Mammary epithelial cell (primary cell): ENCODE measurements at regions of chr1 and their contacts with region 1.

Region 1: DNA sequence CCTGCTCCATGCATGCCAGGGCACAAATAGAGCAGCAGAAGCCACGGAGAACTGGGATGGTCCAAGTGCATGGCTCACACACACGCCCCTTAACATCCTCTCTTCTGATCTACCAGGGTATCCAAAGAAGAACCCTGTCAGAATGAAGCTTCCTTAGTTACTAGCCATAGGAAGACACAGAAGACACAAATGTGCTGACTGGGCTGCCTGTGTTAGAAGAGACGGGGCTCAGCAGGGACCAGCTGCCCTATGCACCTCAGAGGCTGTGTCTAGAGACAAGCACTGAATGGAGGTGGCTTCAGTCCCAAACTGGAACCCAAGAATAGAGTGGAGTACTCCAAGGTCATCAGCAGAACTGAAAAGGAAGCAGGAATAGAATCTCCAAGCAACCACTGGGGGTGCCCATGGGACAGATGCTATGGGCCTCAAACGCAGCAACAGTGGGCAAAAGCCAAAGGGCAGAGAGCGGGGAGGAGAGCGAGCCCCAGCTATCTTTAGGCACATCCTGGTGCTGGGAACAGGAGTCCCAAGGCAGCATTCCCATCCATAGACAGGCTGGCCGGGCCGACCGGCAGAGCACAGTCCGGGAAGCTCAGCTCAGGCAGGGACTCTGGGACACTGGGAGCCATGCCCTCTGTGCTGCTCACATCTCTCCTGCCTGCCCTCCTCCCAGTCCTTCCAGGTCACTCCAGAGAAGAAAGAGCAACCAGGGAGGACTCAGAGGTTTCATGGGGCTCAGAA is 9.5 kb downstream of the SLC6A9 start:
- DNase-seq: no peak
- H3K4me3 ChIP-seq: no peak overlapping the region
- H3K27ac ChIP-seq: no peak overlapping the region
- H3K4me1 ChIP-seq: no peaks in the 10 kb centered on the region
- H3K27me3 ChIP-seq: no peaks in the 10 kb centered on the region
- CTCF ChIP-seq: no peak

Region 2: DNA sequence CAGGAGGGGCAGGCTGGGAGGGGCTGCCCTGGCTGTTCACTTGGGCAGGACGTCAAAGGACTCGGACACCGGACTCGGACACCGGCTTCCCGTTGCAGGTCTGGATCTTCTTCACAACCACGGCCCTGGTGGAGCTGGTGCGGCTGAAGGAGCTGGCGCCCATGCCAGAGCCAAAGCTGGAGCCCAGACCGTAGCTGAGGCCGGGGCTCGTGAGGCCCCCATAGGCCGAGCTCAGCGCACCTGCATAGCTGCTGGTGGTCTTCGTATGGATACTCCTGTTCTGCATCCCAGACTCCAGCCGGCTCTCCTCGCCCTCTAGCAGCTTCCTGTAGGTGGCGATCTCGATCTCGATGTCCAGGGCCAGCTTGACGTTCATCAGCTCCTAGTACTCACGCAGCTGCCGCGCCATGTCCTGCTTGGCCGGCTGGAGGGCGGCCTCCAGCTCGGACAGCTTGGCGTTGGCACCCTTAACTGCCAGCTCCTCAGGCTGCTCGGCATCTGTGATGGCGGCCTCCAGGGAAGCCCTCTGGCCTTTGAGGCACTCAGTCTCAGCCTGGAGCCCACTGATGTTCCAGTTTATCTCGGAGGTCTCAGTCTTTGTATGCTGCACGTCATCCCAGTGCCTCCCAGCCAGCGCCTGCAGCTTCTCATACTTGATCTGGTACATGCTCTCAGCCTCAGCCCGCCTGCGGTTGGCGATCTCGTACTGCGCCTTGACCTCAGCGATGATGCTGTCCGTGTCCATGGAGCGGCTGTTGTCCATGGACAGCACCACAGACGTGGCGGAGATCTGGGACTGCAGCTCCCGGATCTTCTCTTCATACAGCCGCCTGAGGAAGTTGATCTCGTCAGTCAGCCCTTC is 81.8 kb after region 1 on chr1:
- CTCF ChIA-PET with region 1: no interaction called
- dilution Hi-C with region 1: loop called (anchors 5 kb)
- in situ Hi-C with region 1: no loop called
- intact Hi-C with region 1: no loop called
- DNase-seq: no peak
- H3K4me3 ChIP-seq: no peak overlapping the region
- H3K27ac ChIP-seq: no peak overlapping the region
- H3K4me1 ChIP-seq: no peaks in the 10 kb centered on the region
- H3K27me3 ChIP-seq: no peaks in the 10 kb centered on the region
- CTCF ChIP-seq: peak in 1 of 2 donors; percentile 20

Region 3: DNA sequence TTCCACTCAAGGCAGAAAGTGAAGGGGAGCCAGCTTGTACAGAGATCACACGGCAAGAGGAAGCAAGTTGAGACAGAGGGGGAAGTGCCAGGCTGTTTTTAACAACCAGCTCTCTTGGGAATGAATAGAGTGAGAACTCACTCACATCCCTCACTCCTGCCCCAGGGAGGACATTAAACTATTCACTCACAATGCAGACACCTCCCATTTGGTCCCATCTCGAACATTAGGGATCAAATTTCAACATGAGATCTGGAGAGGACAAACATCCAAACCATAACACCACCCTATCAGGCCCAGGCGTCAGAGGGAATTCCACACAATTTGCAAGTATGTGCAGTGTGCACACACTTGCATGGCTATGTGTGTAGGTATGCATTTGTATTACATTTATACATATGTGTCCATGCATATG is 254.2 kb after region 1 on chr1:
- CTCF ChIA-PET with region 1: no interaction called
- dilution Hi-C with region 1: no loop called
- in situ Hi-C with region 1: no loop called
- intact Hi-C with region 1: no loop called
- DNase-seq: no peak
- H3K4me3 ChIP-seq: no peak overlapping the region
- H3K27ac ChIP-seq: no peak overlapping the region
- H3K4me1 ChIP-seq: no peaks in the 10 kb centered on the region
- H3K27me3 ChIP-seq: no peaks in the 10 kb centered on the region
- CTCF ChIP-seq: no peak